Right ventricle myocardium inferior (tissue), 1 donor: ENCODE measurements at regions of chr4 and their contacts with region 1.

Region 1: DNA sequence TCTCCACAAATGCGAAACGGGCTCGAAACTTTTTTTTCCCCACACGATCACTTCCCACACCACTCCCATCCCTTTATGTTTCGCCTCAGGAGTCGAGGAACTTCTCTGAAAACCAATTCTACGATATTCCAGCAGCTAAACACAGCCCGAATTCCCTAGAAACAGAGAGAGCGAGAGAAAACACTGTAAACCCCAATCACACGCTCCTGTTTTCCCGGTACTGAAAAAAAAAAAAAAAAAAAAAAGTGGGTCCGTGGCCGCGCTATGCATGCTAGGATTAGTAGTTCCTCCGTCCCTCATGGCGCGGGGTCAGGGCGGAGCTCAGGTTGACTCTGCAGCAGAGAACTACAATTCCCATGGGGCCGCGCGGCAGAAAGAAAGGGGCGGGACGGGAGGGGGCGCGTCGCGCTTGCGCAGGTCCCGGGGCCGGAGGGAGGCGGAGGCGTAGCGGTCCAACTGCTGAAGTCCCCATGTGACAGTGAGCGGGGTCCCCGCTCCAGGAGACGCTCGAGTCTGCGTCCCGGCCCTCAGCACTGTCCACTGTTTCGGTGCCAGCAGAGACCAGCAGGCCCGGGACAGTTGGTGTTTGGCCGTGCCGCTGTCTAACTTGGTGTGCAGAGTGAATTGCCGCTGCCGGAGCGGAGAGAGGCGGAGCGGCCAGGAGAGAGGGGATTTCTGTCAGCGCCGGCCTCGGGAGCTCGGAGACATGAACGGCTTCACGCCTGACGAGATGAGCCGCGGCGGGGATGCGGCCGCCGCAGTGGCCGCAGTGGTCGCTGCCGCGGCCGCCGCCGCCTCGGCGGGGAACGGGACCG is at the start of gene SAP30:
- DNase-seq: peak; percentile 99
- ATAC-seq: peak; percentile 98
- total RNA-seq, gene SAP30: 14.6 TPM

Region 2: GRCh38 chr4:173334085-173334772 is 36.5 kb before region 1 on chr4 and contains the start of gene HMGB2:
- intact Hi-C with region 1: loop called (anchors 1 kb)
- DNase-seq: peak; percentile 100
- ATAC-seq: peak; percentile 99
- total RNA-seq, gene HMGB2: 42.1 TPM

Region 3: DNA sequence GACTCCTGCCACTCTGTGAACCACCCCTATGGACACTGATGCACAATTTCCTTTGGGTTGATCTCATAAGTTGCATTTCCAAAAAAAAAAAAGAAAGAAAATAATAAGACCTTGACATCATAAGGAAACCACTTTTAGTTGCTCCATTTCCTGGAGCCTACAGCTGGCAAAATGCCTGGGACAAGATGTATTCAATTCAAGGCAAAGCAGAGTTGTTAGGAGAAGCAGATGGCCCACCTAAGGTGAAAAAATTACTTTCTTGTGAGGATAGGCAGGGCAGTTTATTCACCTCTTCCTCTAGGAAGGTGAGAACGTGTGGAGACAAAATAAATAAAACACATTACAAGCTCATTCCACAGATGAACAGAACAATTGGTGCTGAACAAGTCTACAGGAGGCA is 42.4 kb after region 1 on chr4:
- intact Hi-C with region 1: loop called (anchors 2 kb)
- DNase-seq: no peak
- ATAC-seq: no peak